ENCODE measurements at regions of chr10 and their contacts with region 1.

Region 1: GRCh38 chr10:6014241-6014761 is 37.0 kb upstream of the IL15RA start:
- DNase-seq: peak; percentile 32 to 92 (median 60)
- ATAC-seq: peak; percentile 100
- H3K4me3 ChIP-seq: no peak overlapping the region
- H3K4me3 Mint-ChIP-seq: no peak overlapping the region
- H3K27ac ChIP-seq: peak overlapping the region; percentile 68 to 89
- H3K27ac Mint-ChIP-seq: peak overlapping the region; percentile 90
- H3K4me1 ChIP-seq: peaks cover 17% of the 10 kb centered on the region
- H3K4me1 Mint-ChIP-seq: peaks cover 12% of the 10 kb centered on the region
- H3K27me3 ChIP-seq: no peaks in the 10 kb centered on the region
- H3K27me3 Mint-ChIP-seq: no peaks in the 10 kb centered on the region
- CTCF ChIP-seq: peak; percentile 89

Region 2: DNA sequence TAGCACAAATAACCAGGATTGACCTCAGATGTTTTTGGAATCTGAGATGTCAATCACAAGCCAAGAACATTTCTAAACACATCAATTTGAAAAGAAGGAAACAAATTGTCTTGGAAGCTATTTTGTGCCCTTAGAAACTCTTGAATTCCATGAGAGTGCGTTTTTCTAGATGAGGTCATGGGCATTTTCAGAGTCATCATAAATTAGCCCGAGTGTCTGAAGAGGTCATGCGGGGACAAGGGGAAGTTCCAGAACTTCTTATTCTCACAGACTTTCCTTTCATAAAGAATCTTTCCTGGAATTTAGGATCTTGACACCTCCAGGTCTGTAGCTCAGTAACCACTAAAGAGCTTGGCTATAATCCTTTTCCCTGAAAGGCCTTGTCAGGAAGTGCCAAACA is 19.7 kb after region 1 on chr10:
- CTCF ChIA-PET with region 1: interaction called, 7 read pairs
- POLR2A ChIA-PET with region 1: interaction called, 11 read pairs
- intact Hi-C with region 1: no loop called
- DNase-seq: peak in 1 of 14 experiments; percentile 32
- ATAC-seq: no peak
- H3K4me3 ChIP-seq: no peak overlapping the region
- H3K4me3 Mint-ChIP-seq: no peak overlapping the region
- H3K27ac ChIP-seq: no peak overlapping the region
- H3K27ac Mint-ChIP-seq: peak overlapping the region; percentile 19
- H3K4me1 ChIP-seq: peaks cover 33% of the 10 kb centered on the region
- H3K4me1 Mint-ChIP-seq: peaks cover 39% of the 10 kb centered on the region
- H3K27me3 ChIP-seq: no peaks in the 10 kb centered on the region
- H3K27me3 Mint-ChIP-seq: no peaks in the 10 kb centered on the region
- CTCF ChIP-seq: no peak

Region 3: DNA sequence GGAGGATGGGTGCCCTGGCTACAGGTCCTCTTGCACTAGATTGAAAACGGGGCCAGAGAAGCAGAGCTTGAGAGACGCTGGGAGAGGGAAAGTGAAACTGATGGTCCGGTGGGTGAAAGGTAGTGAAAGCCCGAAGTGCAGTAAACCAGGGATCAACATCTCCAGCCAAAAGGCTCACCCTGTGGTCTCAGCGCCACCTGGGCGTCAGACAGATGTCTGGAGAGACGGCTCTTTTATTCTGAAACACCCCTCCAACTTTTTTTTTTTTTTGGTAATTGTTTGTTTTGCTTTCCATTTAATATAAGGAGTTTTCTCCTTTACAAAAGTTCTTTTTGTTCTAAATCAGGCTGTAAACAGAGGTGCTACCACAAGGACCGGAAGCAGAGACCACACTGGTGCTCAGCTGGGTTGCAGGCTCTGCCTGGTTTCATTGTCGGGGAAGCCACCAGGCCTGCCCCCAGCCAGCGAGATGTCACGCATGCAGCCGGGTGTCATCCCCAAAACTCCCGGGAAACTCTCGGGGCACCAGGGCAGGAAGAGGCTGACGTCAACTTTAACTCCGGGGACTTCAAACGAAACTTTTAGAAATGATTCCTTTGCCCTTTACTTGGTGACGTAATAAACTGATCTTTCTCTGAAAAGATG is 36.6 kb after region 1 on chr10:
- CTCF ChIA-PET with region 1: interaction called, 39 read pairs
- POLR2A ChIA-PET with region 1: interaction called, 34 read pairs
- intact Hi-C with region 1: loop called (anchors 1 to 2 kb)
- DNase-seq: peak; percentile 72 to 99 (median 80)
- ATAC-seq: peak; percentile 81
- H3K4me3 ChIP-seq: peak overlapping the region; percentile 63
- H3K4me3 Mint-ChIP-seq: peak overlapping the region; percentile 90
- H3K27ac ChIP-seq: peak overlapping the region; percentile 76 to 89
- H3K27ac Mint-ChIP-seq: peak overlapping the region; percentile 98
- H3K4me1 ChIP-seq: peaks cover 85% of the 10 kb centered on the region
- H3K4me1 Mint-ChIP-seq: peaks cover 86% of the 10 kb centered on the region
- H3K27me3 ChIP-seq: no peaks in the 10 kb centered on the region
- H3K27me3 Mint-ChIP-seq: no peaks in the 10 kb centered on the region
- CTCF ChIP-seq: no peak

Region 4: GRCh38 chr10:6083523-6084475 is 69.5 kb after region 1 on chr10:
- CTCF ChIA-PET with region 1: interaction called, 48 read pairs
- POLR2A ChIA-PET with region 1: interaction called, 17 read pairs
- intact Hi-C with region 1: loop called (anchors 1 kb)
- DNase-seq: peak in 10 of 14 experiments; percentile 11 to 73 (median 32)
- ATAC-seq: peak; percentile 25
- H3K4me3 ChIP-seq: peak overlapping the region; percentile 1
- H3K4me3 Mint-ChIP-seq: peak overlapping the region; percentile 63
- H3K27ac ChIP-seq: peak overlapping the region in 1 of 2 donors; percentile 18
- H3K27ac Mint-ChIP-seq: peak overlapping the region; percentile 43
- H3K4me1 ChIP-seq: peaks cover 37% of the 10 kb centered on the region
- H3K4me1 Mint-ChIP-seq: peaks cover 48% of the 10 kb centered on the region
- H3K27me3 ChIP-seq: no peaks in the 10 kb centered on the region
- H3K27me3 Mint-ChIP-seq: no peaks in the 10 kb centered on the region
- CTCF ChIP-seq: no peak